PC-3 (cell line): ENCODE measurements at regions of chr5 and their contacts with region 1.

Region 1: DNA sequence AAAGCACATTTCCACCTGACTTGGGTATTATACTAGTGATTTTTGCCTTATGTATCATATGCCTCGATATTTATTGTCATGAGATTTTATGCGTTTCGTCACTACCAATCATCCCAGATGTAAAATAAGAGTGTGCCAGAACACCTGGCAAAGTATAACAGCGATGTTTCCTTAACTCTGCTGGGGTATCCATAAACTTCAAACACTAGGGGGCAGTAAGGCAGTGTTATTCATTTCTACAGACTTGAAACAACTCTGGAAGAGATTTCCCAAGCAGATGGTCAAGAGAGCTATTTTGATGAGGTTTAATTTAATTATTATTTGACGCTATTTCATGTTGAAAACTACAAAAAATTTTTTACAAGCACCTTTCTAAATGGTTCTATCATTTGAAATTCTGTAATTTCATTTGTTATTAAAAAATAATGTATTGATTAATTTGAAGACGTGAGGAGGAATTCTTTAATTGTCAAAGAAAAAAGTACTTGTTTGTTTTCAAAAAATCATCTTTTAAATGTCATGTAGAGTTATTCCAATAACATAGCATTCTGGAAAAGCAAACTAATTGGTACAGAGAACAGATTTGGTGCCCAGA is 388.5 kb upstream of the CTNND2 start:
- DNase-seq: peak; percentile 88
- ATAC-seq: peak; percentile 72
- H3K4me3 ChIP-seq: no peak overlapping the region
- H3K27ac ChIP-seq: no peak overlapping the region
- H3K4me1 ChIP-seq: no peaks in the 10 kb centered on the region
- H3K27me3 ChIP-seq: no peaks in the 10 kb centered on the region
- CTCF ChIP-seq: peak; percentile 90

Region 2: DNA sequence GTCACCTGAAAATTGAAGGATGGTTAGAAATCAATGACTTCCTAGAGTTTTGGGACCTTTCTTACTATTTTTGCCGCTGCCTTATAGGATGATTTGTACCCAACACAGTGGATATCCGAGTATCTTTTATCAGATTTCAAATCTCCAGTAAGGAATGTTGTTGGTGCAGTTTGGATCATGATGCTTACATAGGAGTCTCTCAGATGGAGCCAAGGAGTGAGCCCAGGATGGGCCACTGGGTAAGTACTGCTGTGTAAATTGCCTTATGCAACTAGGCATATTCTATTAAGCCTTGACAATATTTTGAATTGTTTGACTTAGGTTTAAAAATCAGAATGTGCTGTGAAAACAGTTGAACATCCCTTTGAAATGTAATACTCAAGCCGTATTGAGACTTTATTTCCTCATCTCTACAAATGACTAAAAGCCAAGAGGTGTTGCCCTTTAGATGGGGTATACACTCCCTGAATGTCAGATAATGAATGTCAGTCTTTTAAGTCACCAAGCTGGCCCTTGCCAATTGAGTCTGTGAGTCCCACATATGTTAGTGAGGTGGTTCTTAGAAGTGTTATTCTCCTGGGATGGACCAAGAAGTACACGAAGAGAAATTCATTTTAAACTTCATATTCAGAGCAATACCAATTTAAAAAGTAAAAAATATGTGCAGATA is 116.7 kb before region 1 on chr5:
- CTCF ChIA-PET with region 1: no interaction called
- POLR2A ChIA-PET with region 1: no interaction called
- intact Hi-C with region 1: no loop called
- DNase-seq: peak; percentile 29
- ATAC-seq: no peak
- H3K4me3 ChIP-seq: no peak overlapping the region
- H3K27ac ChIP-seq: no peak overlapping the region
- H3K4me1 ChIP-seq: no peaks in the 10 kb centered on the region
- H3K27me3 ChIP-seq: no peaks in the 10 kb centered on the region
- CTCF ChIP-seq: no peak

Region 3: DNA sequence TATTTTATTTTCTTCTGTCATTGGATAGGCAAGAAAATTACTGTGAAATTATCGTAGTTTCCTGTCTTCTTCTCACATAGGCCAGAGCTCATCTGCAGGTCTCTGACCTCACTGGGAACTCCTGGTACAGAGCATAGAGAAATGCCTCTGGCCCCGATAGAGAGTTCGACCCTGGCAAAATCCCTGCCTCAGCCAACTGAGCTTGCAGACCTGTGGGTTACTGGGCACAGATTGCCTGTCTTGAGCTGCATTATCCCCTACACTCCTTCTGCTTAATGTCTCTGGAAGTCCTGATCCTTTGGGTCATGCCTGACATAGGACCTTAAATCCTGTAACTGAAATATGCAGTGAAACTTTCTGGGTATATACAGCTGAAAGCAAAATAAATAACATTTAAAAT is 50.9 kb after region 1 on chr5:
- CTCF ChIA-PET with region 1: no interaction called
- POLR2A ChIA-PET with region 1: no interaction called
- intact Hi-C with region 1: no loop called
- DNase-seq: no peak
- ATAC-seq: no peak
- H3K4me3 ChIP-seq: no peak overlapping the region
- H3K27ac ChIP-seq: no peak overlapping the region
- H3K4me1 ChIP-seq: no peaks in the 10 kb centered on the region
- H3K27me3 ChIP-seq: no peaks in the 10 kb centered on the region
- CTCF ChIP-seq: no peak

Region 4: DNA sequence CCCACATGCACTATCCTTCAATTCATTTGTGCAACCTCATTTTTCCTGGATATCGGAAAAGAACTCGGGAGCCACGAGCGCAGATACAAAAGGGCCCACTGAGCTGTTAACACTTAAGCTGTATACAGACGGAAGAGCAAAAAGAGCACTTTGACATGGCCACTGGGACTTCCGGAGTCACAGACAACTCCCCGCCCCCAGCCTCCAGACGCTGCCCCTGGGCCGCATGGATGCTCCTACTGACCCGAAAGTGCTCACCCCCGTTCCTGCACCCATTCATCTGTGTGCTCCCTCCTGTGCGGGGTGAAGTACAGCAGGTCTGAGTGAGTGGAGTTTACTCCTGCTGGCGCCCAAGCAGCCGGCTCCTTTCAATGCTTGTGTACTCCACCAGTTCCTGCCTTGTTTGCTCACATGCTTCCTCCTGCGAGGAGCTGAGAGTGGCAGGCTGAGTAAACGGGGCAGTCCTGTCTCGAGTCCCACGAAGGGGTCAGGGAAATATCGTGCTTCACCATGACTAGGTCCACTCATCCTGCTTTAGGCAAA is 512.5 kb after region 1 on chr5:
- CTCF ChIA-PET with region 1: no interaction called
- POLR2A ChIA-PET with region 1: no interaction called
- intact Hi-C with region 1: no loop called
- DNase-seq: no peak
- ATAC-seq: no peak
- H3K4me3 ChIP-seq: no peak overlapping the region
- H3K27ac ChIP-seq: no peak overlapping the region
- H3K4me1 ChIP-seq: no peaks in the 10 kb centered on the region
- H3K27me3 ChIP-seq: no peaks in the 10 kb centered on the region
- CTCF ChIP-seq: no peak

Region 5: GRCh38 chr5:13108265-13108664 is 815.6 kb after region 1 on chr5:
- CTCF ChIA-PET with region 1: no interaction called
- POLR2A ChIA-PET with region 1: no interaction called
- intact Hi-C with region 1: loop called (anchors 10 kb)
- DNase-seq: peak; percentile 54
- ATAC-seq: peak; percentile 73
- H3K4me3 ChIP-seq: peak overlapping the region; percentile 23; the same call in 1 of the 2 replicates
- H3K27ac ChIP-seq: peak overlapping the region; percentile 0; the same call in 1 of the 2 replicates
- H3K4me1 ChIP-seq: peaks cover 11% of the 10 kb centered on the region; the same call in 1 of the 2 replicates
- H3K27me3 ChIP-seq: no peaks in the 10 kb centered on the region
- CTCF ChIP-seq: no peak

Region 6: DNA sequence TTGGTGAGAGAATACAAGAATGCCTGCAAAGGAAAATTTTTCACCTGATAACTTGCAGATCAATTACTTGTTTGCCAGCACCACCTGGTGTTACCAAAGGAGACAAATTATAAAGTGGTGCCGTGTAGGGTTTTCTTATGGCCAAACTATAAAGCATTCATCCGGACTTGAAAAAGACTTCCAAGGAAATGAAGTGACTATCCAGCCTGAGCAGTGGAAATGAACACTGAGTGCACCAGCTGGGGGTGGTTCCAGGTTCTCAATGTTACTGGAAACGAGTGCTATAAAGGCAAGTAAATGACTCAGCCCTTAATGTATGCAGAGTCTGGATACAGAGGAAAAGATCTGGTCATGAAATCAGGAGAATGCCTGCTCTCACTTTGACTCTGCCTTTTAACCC is 1538.6 kb after region 1 on chr5:
- CTCF ChIA-PET with region 1: no interaction called
- POLR2A ChIA-PET with region 1: no interaction called
- intact Hi-C with region 1: loop called (anchors 5 kb)
- DNase-seq: peak; percentile 72
- ATAC-seq: peak; percentile 99
- H3K4me3 ChIP-seq: no peak overlapping the region
- H3K27ac ChIP-seq: no peak overlapping the region
- H3K4me1 ChIP-seq: peaks cover 6% of the 10 kb centered on the region
- H3K27me3 ChIP-seq: no peaks in the 10 kb centered on the region
- CTCF ChIP-seq: peak; percentile 80

Region 7: GRCh38 chr5:13957032-13957645 is 1664.4 kb after region 1 on chr5:
- CTCF ChIA-PET with region 1: no interaction called
- POLR2A ChIA-PET with region 1: no interaction called
- intact Hi-C with region 1: loop called (anchors 2 kb)
- DNase-seq: peak; percentile 91
- ATAC-seq: peak; percentile 100
- H3K4me3 ChIP-seq: no peak overlapping the region
- H3K27ac ChIP-seq: no peak overlapping the region
- H3K4me1 ChIP-seq: no peaks in the 10 kb centered on the region
- H3K27me3 ChIP-seq: no peaks in the 10 kb centered on the region
- CTCF ChIP-seq: peak; percentile 97